HCT116 (cell line): ENCODE measurements at regions of chr7 and their contacts with region 1.

Region 1: DNA sequence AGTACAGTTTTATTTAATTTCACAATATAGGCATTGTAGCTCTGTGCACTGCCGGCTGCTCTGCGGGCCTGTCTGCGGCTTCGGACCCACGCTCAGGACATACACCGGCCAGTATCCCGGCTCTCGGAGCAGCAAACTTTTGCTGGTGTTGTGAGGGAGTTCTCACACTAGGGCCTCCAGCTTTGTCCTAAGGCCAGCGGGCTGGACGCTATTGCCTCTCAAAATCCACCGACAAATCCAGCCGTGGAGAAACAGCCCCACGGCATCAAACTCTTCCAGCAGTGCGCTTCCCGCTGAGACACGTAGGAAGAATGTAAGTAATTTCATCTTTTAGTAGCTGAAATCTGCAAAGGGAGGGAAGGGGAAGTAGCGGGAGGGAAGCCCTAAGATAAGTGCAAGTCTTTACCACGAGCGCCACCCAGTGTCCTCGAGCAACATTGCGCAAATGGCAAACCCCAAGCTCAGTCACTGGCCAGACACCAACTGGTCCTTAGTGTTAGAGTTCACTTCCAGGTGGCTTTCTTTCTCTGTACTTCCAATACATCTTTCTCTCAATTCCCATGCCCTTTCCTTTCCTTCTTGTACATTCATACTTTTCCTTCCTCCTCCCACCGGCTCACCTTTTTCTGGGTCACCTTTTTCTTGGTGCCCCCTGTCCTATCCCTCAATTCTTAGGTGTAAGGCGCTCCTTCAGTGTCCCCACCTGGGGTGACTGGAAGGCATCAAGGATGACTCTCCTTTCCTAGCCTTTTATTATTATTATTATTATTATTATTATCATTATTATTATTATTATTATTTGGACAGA is 3.0 kb upstream of the DLX5 start:
- DNase-seq: peak; percentile 38
- ATAC-seq: peak; percentile 96
- H3K4me3 ChIP-seq: no peak overlapping the region
- H3K27ac ChIP-seq: no peak overlapping the region
- H3K4me1 ChIP-seq: no peaks in the 10 kb centered on the region
- H3K27me3 ChIP-seq: peaks cover 34% of the 10 kb centered on the region
- CTCF ChIP-seq: peak; percentile 51 to 87 (median 86); a peak in 5 of 6 replicates
- POLR2A ChIP-seq: no peak
- RAD21 ChIP-seq: peak; percentile 88

Region 2: GRCh38 chr7:95723592-95724180 is 1303.9 kb before region 1 on chr7:
- CTCF ChIA-PET with region 1: no interaction called
- POLR2A ChIA-PET with region 1: no interaction called
- RAD21 ChIA-PET with region 1: no interaction called
- intact Hi-C with region 1: loop called (anchors 5 kb)
- DNase-seq: peak; percentile 51
- ATAC-seq: peak; percentile 95
- H3K4me3 ChIP-seq: no peak overlapping the region
- H3K27ac ChIP-seq: no peak overlapping the region
- H3K4me1 ChIP-seq: no peaks in the 10 kb centered on the region
- H3K27me3 ChIP-seq: peaks cover 31% of the 10 kb centered on the region; the same call in 1 of the 2 replicates
- CTCF ChIP-seq: peak; percentile 48 to 63 (median 58); a peak in 5 of 6 replicates
- POLR2A ChIP-seq: no peak
- RAD21 ChIP-seq: peak; percentile 81

Region 3: GRCh38 chr7:95925236-95925635 is 1102.4 kb before region 1 on chr7:
- CTCF ChIA-PET with region 1: interaction called, 3 read pairs
- POLR2A ChIA-PET with region 1: no interaction called
- RAD21 ChIA-PET with region 1: no interaction called
- intact Hi-C with region 1: loop called (anchors 2 kb)
- DNase-seq: no peak
- ATAC-seq: no peak
- H3K4me3 ChIP-seq: no peak overlapping the region
- H3K27ac ChIP-seq: no peak overlapping the region
- H3K4me1 ChIP-seq: no peaks in the 10 kb centered on the region
- H3K27me3 ChIP-seq: peaks cover 82% of the 10 kb centered on the region
- CTCF ChIP-seq: no peak
- POLR2A ChIP-seq: no peak
- RAD21 ChIP-seq: no peak

Region 4: GRCh38 chr7:96179837-96180236 is 847.8 kb before region 1 on chr7:
- CTCF ChIA-PET with region 1: no interaction called
- POLR2A ChIA-PET with region 1: no interaction called
- RAD21 ChIA-PET with region 1: no interaction called
- intact Hi-C with region 1: loop called (anchors 2 kb)
- DNase-seq: no peak
- ATAC-seq: no peak
- H3K4me3 ChIP-seq: no peak overlapping the region
- H3K27ac ChIP-seq: no peak overlapping the region
- H3K4me1 ChIP-seq: no peaks in the 10 kb centered on the region
- H3K27me3 ChIP-seq: no peaks in the 10 kb centered on the region
- CTCF ChIP-seq: no peak
- POLR2A ChIP-seq: no peak
- RAD21 ChIP-seq: peak; percentile 37

Region 5: GRCh38 chr7:96596120-96596826 is 431.4 kb before region 1 on chr7:
- CTCF ChIA-PET with region 1: interaction called, 12 read pairs
- POLR2A ChIA-PET with region 1: no interaction called
- RAD21 ChIA-PET with region 1: no interaction called
- intact Hi-C with region 1: no loop called
- DNase-seq: no peak
- ATAC-seq: peak; percentile 55; the same call in 1 of the 2 replicates
- H3K4me3 ChIP-seq: no peak overlapping the region
- H3K27ac ChIP-seq: no peak overlapping the region
- H3K4me1 ChIP-seq: no peaks in the 10 kb centered on the region
- H3K27me3 ChIP-seq: peaks cover 15% of the 10 kb centered on the region; the same call in 1 of the 2 replicates
- CTCF ChIP-seq: peak in 2 of 3 experiments; percentile 14 to 23; a peak in 3 of 6 replicates
- POLR2A ChIP-seq: no peak
- RAD21 ChIP-seq: peak; percentile 11; the same call in 1 of the 2 replicates

Region 6: GRCh38 chr7:97094284-97094930 is 66.8 kb after region 1 on chr7:
- CTCF ChIA-PET with region 1: no interaction called
- POLR2A ChIA-PET with region 1: no interaction called
- RAD21 ChIA-PET with region 1: no interaction called
- intact Hi-C with region 1: no loop called
- DNase-seq: no peak
- ATAC-seq: no peak
- H3K4me3 ChIP-seq: no peak overlapping the region
- H3K27ac ChIP-seq: no peak overlapping the region
- H3K4me1 ChIP-seq: no peaks in the 10 kb centered on the region
- H3K27me3 ChIP-seq: peaks cover 19% of the 10 kb centered on the region
- CTCF ChIP-seq: no peak
- POLR2A ChIP-seq: no peak
- RAD21 ChIP-seq: no peak